GM10248 (cell line): ENCODE measurements at regions of chr5 and their contacts with region 1.

Region 1: DNA sequence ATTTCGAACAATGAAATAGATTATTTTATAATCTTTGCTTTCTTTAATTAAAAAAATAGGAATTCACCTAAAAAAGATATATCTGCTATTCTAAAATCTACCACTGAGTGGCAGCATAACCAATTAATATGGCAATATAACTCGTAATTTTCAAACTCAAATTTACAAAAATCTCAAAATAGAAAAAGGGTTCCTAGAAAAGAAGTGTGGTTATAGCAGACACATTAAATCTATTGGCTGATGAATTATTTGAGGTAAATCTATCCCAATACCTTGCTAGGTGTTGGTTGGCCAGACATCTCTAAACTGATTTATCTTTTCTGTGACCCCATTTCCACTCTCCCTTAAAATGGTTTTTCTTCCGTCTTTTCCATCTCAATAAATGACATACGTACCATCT is 30.2 kb upstream of the NRG2 start:
- DNase-seq: peak; percentile 28
- CTCF ChIP-seq: peak; percentile 28

Region 2: GRCh38 chr5:140010798-140011197 is 62.5 kb before region 1 on chr5:
- CTCF ChIA-PET with region 1: no interaction called
- POLR2A ChIA-PET with region 1: no interaction called
- DNase-seq: no peak
- CTCF ChIP-seq: no peak

Region 3: DNA sequence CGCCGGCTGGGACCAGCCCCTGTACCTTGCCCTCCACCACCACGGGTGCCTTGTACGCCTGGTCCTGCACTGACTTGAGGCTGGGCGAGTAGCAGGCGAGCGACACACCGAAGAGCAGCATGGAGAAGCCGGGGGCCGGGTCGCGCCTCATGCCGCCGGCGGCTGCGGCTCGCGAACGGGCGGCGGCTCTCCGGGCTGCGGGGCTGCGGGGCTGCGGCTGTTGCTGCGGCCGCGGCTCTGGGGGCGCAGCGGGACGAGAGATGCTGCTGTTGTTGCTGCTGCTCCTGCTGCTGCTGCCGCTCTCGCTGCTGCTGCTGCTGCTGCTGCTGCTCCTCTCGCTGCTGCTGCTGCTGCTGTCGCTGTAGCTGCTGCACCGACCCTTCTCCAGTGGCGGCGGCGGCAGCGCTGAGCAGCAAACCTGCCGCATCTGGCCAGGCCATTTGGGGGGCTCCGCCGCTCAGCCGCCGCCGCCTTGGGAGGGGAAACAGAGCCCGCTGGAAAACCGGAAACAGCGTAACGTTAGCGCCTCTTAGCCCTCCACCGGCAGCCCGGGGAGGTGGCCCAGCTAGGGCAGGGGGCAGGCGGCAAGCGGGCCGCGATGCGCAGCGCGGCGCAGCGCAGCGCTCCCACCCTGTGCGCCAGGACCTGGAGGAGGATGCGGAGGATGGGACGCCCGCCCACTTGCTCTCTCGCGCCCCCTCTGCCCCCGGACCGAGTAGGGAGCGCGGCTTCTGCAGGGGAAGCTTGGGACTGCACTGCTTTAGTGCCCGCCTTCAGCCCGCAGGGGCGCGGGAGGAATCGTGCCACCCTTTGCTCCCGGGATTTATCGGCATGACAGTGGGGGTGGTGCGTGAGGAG is 30.4 kb before region 1 on chr5 and contains the start of gene NRG2:
- CTCF ChIA-PET with region 1: interaction called, 11 read pairs
- POLR2A ChIA-PET with region 1: no interaction called
- DNase-seq: peak; percentile 75
- CTCF ChIP-seq: peak; percentile 63

Region 4: DNA sequence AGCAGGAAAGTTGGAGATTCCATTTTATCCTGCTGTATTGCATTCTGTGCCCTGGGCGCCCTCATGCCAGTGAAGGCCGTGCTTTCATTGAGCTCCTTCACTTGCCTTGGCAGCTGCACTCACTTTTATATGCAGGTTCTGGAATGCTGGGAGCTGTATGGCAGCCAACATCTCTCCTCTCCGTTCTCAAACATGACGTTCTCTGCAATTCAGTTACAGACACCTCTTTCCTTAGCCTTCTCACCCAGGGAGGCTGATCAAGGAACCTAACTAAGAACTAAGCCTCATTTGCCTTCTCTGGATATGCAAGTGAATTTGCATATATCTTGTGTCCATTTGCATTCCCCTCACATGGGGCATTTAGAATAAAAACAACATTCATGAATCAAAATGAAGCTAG is 11.2 kb after region 1 on chr5:
- CTCF ChIA-PET with region 1: interaction called, 16 read pairs
- POLR2A ChIA-PET with region 1: no interaction called
- DNase-seq: no peak
- CTCF ChIP-seq: no peak

Region 5: DNA sequence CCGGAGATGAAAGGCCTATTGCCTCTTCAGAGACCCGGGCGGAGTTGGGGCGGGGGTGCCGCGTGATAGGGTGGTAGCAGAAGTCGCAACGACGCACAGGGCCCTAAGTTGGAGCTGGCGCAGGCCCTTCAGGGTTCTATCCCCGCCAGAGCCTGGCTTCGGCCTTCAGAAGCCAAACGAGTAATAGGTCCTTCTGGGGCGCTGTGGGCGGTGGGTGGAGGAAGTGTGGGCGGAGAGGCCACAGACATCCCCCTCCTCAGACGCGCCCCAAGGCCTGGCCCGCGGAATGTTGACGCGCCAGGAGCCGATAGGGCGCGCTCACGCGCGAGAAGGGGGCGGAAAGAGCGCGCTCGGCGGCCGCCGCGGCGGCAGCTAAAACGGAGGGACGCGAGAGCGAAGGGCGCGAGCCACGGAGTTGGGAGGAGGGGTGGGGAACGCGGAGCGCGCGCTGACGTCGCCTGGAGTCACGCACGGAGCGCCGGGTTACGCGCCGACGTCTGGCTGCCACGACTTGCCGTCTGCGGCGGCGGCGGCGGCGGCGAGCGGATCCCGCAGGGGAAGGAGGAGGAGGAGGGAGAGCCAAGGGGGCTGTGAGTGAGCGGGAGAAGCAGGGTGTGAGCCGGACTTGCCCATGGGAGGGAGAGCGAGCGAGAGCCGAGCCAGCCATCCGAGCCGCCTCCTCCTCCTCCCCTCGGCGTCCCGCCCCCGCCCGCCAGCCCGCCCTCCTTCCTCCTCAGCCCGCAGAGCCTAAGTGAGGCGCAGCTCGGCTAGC is 34.2 kb after region 1 on chr5:
- CTCF ChIA-PET with region 1: interaction called, 18 read pairs
- POLR2A ChIA-PET with region 1: no interaction called
- DNase-seq: peak; percentile 93
- CTCF ChIP-seq: peak; percentile 14

Region 6: GRCh38 chr5:140157032-140157803 is 83.9 kb after region 1 on chr5:
- CTCF ChIA-PET with region 1: interaction called, 116 read pairs
- POLR2A ChIA-PET with region 1: no interaction called
- DNase-seq: peak; percentile 90
- CTCF ChIP-seq: peak; percentile 91